ENCODE measurements at regions of chr5 and their contacts with region 1.

Region 1: DNA sequence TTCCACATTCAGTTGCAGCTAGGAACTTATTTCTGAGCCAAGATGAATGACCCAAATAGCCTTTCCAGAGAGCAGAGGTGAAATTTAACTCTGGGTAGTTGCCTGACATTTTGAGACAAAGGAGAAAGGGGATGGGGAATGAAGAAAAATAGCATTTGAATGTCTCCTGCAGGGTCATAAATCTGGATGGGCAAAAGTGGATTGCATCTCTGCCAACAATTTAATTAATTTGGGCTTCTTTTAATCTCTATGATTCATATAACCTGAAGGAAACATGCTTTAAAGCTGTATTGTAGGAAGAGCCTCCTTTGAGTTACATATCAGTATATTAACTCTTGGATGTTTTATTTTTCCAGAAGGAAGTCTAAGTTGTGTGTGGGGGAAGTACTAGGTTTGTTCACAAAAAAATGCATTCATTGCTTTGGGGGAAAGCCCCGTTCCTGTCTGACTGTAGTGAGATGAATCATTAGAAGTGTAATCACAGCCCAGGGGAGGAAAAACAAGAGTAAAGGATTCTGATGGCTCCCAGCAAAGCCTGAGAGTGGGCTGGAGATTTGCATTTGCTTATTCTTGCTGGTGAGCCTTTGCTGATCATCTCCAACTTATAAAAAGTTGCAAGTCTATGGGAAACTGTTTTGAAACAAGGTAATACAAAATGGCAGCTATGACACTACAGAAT is 133.0 kb upstream of the IQGAP2 start:
- DNase-seq: peak; percentile 77
- H3K4me3 Mint-ChIP-seq: peak overlapping the region; percentile 83
- H3K27ac Mint-ChIP-seq: peak overlapping the region; percentile 95
- H3K4me1 Mint-ChIP-seq: peaks cover 41% of the 10 kb centered on the region
- H3K27me3 Mint-ChIP-seq: no peaks in the 10 kb centered on the region

Region 2: GRCh38 chr5:76175051-76175666 is 94.9 kb before region 1 on chr5:
- intact Hi-C with region 1: loop called (anchors 5 kb)
- DNase-seq: peak; percentile 85
- H3K4me3 Mint-ChIP-seq: no peak overlapping the region
- H3K27ac Mint-ChIP-seq: no peak overlapping the region
- H3K4me1 Mint-ChIP-seq: peaks cover 17% of the 10 kb centered on the region
- H3K27me3 Mint-ChIP-seq: peaks cover 2% of the 10 kb centered on the region

Region 3: GRCh38 chr5:76256116-76256889 is 13.8 kb before region 1 on chr5:
- intact Hi-C with region 1: loop called (anchors 1 kb)
- DNase-seq: peak; percentile 89
- H3K4me3 Mint-ChIP-seq: no peak overlapping the region
- H3K27ac Mint-ChIP-seq: no peak overlapping the region
- H3K4me1 Mint-ChIP-seq: peaks cover 9% of the 10 kb centered on the region
- H3K27me3 Mint-ChIP-seq: peaks cover 34% of the 10 kb centered on the region

Region 4: GRCh38 chr5:76325876-76326491 is 55.9 kb after region 1 on chr5:
- intact Hi-C with region 1: loop called (anchors 5 kb)
- DNase-seq: peak; percentile 86
- H3K4me3 Mint-ChIP-seq: peak overlapping the region; percentile 74
- H3K27ac Mint-ChIP-seq: peak overlapping the region; percentile 93
- H3K4me1 Mint-ChIP-seq: peaks cover 58% of the 10 kb centered on the region
- H3K27me3 Mint-ChIP-seq: no peaks in the 10 kb centered on the region

Region 5: GRCh38 chr5:76367623-76368371 is 97.7 kb after region 1 on chr5:
- intact Hi-C with region 1: loop called (anchors 1 kb)
- DNase-seq: peak; percentile 68
- H3K4me3 Mint-ChIP-seq: no peak overlapping the region
- H3K27ac Mint-ChIP-seq: peak overlapping the region; percentile 84
- H3K4me1 Mint-ChIP-seq: peaks cover 24% of the 10 kb centered on the region
- H3K27me3 Mint-ChIP-seq: no peaks in the 10 kb centered on the region

Region 6: GRCh38 chr5:76521240-76521758 is 251.2 kb after region 1 on chr5:
- intact Hi-C with region 1: loop called (anchors 1 kb)
- DNase-seq: peak; percentile 65
- H3K4me3 Mint-ChIP-seq: peak overlapping the region; percentile 77
- H3K27ac Mint-ChIP-seq: peak overlapping the region; percentile 96
- H3K4me1 Mint-ChIP-seq: peaks cover 37% of the 10 kb centered on the region
- H3K27me3 Mint-ChIP-seq: no peaks in the 10 kb centered on the region

Region 7: DNA sequence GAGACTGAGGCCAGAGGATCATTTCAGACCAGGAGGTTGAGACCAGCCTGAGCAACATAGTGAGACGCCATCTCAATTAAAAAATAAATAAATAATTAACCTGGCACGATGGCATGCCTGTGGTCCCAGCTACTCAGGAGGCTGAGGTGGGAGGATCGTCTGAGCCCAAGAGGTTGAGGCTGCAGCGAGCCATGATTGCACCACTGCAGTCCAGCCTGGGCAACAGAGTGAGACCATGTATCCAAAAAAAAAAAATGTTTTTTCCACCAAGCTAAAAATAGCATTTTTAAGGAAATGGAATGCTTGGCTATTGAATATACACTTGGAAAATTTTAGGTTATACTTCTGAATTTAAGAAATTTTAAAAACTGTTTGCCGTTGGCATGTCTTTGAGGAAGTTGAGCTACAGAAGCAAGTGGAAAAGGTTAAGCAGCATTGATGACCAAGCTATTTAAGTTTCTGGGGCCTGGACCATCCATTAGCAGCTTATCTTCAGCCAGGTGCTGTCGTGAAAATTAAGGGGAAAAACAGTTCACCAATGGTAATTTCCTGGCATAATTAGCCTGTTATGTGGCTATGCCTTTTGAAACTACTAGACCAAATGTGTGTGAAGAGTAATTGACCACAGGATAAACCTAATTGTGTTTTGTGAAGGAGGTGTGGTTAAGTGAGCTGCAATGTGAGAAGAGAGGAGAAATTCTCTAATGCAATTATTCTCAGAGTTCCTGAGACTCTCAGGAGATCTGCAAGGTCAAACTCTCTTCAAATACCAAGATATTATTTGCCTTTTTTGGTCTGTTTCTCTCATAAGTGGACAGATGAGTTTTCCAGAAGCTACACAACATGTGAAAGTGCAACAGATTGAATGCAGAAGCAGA is 466.8 kb after region 1 on chr5:
- intact Hi-C with region 1: loop called (anchors 5 kb)
- DNase-seq: no peak
- H3K4me3 Mint-ChIP-seq: peak overlapping the region; percentile 17
- H3K27ac Mint-ChIP-seq: peak overlapping the region; percentile 46
- H3K4me1 Mint-ChIP-seq: peaks cover 29% of the 10 kb centered on the region
- H3K27me3 Mint-ChIP-seq: no peaks in the 10 kb centered on the region

Measured in activated CD4-positive, alpha-beta T cell treated with anti-CD3 and anti-CD28 coated beads, Interleukin-2, amount 10 ng/mL, durations not matched to agents 24 days and 14 days (primary cell).